Endothelial cell of umbilical vein (primary cell): ENCODE measurements at regions of chr16 and their contacts with region 1.

Region 1: DNA sequence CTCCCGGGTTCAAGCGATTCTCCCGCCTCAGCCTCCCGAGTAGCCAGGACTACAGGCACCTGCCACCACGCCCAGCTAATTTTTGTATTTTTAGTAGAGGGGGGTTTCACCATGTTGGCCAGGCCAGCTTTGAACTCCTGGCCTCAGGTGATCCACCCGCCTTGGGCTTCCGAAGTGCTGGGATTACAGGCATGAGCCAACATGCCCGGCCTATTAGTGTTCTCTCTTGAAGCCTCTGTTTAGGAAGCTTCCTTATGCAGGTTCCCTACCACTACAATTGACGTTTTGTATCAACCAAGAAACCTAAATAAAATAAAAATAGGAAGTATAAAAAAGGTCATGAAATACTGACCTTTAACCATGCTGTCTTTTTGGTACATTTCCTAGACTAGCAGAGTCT is 16.0 kb downstream of the CHST5 start:
- DNase-seq: no peak
- H3K4me3 ChIP-seq: no peak overlapping the region
- H3K27ac ChIP-seq: no peak overlapping the region
- H3K4me1 ChIP-seq: peaks cover 5% of the 10 kb centered on the region
- H3K27me3 ChIP-seq: no peaks in the 10 kb centered on the region
- CTCF ChIP-seq: no peak
- POLR2A ChIP-seq: no peak

Region 2: DNA sequence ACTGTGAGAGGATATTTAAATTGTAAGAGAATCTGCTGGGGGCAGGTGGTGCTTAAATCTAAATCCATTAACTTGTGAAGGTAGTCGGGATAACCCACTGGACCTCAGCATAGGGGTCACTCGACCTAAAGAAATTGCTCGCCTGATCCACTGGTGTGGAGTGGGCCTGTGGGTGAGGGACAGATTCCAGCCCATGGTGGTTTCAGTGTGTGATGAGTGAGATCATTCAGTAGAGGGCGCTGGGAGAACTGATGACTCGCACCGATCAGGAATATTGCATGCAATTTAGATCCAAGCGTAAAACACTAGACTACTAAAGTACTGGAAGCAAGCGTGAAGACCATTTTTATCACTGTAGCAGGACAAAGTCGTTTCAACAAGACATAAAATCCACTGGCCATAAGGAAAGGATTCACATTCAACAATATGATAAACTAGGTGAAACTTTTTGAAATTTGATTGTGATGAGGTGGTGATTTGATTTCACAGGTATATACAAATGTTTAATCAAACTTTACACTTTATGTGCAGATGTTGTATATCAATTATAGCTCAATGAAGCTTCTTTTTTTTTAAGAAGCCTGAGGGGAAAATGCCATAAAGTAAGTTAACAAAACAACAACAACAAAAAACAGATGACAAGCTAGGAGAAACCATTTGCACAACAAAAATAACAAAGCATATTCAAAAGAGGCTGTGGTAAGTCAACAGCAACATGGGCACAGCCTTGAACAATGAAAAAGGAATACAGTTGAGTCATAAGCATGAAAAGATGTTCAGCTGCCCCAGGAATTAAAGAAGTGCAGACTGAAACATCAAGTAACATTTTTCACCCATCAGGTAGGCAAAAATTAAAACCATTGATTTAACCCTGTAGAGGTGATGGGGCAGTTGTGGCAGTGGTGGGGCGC is 47.9 kb before region 1 on chr16:
- CTCF ChIA-PET with region 1: interaction called, 31 read pairs
- POLR2A ChIA-PET with region 1: no interaction called
- dilution Hi-C with region 1: no loop called
- intact Hi-C with region 1: loop called (anchors 2 kb)
- DNase-seq: peak; percentile 67
- H3K4me3 ChIP-seq: no peak overlapping the region
- H3K27ac ChIP-seq: no peak overlapping the region
- H3K4me1 ChIP-seq: no peaks in the 10 kb centered on the region
- H3K27me3 ChIP-seq: no peaks in the 10 kb centered on the region
- CTCF ChIP-seq: peak; percentile 65 to 74
- POLR2A ChIP-seq: no peak

Region 3: DNA sequence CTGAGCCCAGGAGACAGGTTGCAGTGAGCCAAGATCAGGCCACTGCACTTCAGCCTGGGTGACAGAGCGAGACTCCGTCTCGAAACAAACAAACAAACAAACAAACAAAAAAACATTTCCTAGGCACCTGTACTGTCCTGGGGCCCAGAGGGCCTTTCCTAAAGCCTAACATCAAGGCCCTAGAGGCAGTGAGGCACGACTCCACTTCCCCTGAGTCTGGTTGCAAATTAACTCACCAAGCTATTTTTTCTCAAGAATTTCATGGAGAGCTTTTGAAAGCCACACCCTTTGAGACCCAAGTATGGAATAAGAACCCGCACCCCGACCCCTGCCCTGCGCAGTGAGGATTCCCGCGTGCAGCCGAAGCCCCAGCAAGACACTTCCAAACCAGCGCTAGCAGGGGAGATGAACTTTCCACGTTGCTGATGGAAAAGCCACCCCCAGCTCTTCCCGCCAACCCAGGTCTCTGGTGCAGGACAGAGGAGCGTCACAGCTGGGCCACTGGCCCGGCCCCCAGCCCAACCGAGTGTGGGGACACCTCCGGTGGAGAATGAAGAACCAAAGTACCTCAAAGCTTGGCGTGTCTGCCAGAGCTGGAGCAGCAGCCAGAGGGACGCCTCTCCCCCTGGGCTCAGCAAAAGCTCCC is 14.8 kb after region 1 on chr16:
- CTCF ChIA-PET with region 1: interaction called, 16 read pairs
- POLR2A ChIA-PET with region 1: interaction called, 4 read pairs
- dilution Hi-C with region 1: no loop called
- intact Hi-C with region 1: no loop called
- DNase-seq: no peak
- H3K4me3 ChIP-seq: no peak overlapping the region
- H3K27ac ChIP-seq: no peak overlapping the region
- H3K4me1 ChIP-seq: no peaks in the 10 kb centered on the region
- H3K27me3 ChIP-seq: no peaks in the 10 kb centered on the region
- CTCF ChIP-seq: no peak
- POLR2A ChIP-seq: no peak

Region 4: DNA sequence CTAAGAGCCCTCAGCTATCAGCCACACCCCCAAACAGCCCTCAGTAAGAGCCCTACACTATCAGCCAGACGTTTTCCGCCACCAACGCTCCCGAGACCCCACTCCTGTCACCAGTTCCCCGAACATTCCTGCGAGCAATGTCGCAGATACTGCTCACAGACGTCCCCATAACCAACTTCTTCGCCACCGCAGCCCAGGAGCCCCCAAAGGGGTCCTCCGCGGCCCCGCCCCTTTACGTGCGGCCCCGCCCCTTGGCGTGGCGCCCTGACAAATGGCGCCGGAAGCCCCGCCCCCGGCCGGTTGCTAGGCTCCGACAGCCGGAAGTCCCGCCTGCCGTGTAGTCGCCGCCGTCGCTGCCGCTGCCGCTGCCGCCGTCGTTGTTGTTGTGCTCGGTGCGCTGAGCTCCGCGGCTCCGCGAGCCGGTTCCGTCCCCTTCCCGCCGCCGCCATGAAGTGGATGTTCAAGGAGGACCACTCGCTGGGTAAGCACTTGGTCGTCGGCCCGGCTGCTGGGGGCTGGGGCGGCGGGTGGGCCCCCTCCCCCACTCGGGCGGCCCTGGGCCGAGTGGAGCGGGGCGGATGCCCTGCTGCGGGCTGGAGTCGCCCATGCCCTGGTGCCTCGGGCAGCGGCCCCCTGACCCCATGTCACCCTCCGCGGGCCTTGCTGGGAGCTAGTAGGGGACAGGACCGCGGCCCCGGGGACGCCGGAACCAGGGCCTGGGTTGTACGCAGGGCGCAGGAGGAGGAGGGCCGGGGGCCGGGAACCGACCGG is 46.3 kb after region 1 on chr16 and contains the start of gene GABARAPL2:
- CTCF ChIA-PET with region 1: interaction called, 17 read pairs
- POLR2A ChIA-PET with region 1: no interaction called
- dilution Hi-C with region 1: no loop called
- intact Hi-C with region 1: loop called (anchors 1 kb)
- DNase-seq: peak; percentile 84
- H3K4me3 ChIP-seq: peak within 1 kb of the TSS; percentile 48 to 83 (median 79)
- H3K27ac ChIP-seq: no peak within 1 kb of the TSS
- H3K4me1 ChIP-seq: peaks cover 9% of the 10 kb centered on the region
- H3K27me3 ChIP-seq: peaks cover 7 to 24% of the 10 kb centered on the region in 2 experiments
- CTCF ChIP-seq: no peak
- POLR2A ChIP-seq: peak; percentile 66
- total RNA-seq, gene GABARAPL2: 77.9 and 82.5 TPM in 2 replicates

Region 5: DNA sequence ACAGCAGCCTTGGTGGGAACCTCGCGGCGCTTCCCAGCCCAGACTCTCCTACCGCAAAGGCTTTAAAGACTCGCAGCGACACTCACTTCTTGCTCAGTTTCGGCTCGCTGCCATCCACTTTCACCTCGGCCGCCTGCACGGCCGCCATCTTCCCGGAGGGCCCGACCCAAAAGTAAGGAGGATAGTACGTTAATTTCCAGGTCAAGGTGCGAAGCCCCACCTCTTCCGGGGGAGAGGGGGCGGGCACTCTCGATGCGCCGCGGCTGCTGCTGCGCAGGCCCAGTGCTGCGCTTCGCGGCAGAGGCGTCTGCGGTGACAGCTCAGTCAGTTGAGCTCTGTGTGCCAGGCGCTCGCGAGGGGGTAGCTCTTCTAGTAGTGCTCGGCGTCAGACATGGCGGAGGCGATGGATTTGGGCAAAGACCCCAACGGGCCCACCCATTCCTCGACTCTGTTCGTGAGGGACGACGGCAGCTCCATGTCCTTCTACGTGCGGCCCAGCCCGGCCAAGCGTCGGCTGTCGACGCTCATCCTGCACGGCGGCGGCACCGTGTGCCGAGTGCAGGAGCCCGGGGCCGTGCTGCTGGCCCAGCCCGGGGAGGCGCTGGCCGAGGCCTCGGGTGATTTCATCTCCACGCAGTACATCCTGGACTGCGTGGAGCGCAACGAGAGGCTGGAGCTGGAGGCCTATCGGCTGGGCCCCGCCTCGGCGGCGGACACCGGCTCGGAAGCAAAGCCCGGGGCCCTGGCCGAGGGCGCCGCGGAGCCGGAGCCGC is 127.8 kb after region 1 on chr16 and contains the starts of genes KARS1 and TERF2IP:
- CTCF ChIA-PET with region 1: interaction called, 3 read pairs
- POLR2A ChIA-PET with region 1: interaction called, 10 read pairs
- dilution Hi-C with region 1: no loop called
- intact Hi-C with region 1: loop called (anchors 1 kb)
- DNase-seq: peak; percentile 97
- H3K4me3 ChIP-seq: peak within 1 kb of the TSS; percentile 95 to 98 (median 98)
- H3K27ac ChIP-seq: peak within 1 kb of the TSS; percentile 67
- H3K4me1 ChIP-seq: peaks cover 32% of the 10 kb centered on the region
- H3K27me3 ChIP-seq: no peaks in the 10 kb centered on the region
- CTCF ChIP-seq: no peak
- POLR2A ChIP-seq: peak; percentile 92
- total RNA-seq, gene KARS1: 137 and 146 TPM in 2 replicates
- total RNA-seq, gene TERF2IP: 40.7 and 41.5 TPM in 2 replicates